T-cell (primary cell): ENCODE measurements at regions of chr2 and their contacts with region 1.

Region 1: DNA sequence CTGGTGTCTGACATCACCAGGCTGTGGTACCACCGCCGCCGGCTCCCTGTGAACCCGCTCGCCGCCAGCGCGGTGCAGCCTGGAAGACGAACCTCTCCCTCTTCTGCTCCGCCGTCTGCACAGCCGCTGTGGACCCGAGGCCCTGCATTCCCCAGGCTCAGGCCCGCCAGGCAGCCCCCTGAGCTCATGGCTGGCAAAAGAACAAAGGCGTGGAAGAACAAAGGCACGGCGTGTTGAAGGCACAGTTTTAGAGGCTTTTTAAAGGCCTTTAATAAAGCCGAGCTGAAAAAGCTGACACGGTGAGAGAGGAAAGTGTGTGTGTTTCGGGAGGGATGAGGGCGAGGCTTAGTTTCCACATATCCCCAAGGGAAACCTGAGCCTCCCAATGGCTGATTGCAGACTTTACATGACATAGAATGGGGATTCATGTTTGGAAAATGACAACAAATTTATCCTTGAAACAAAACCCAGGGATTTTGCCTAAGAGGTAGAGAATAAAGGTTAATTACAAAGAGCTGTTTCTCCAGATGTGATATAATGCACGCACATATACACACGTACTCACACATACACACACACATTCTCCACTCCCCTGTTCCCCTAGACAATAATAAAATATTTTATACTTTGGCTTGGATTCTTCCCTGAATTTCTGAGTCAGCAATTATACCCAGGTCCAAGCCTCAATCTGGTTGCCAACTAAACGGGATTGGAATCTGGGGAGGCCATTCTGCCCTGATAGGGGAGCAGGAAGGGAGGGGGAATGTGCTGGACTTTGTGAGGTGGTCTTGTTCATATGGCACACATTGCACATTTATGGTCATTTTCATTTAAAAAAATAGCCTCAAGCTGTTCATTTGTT is 39.7 kb downstream of the RFX8 start:
- DNase-seq: no peak
- ATAC-seq: no peak
- H3K4me3 ChIP-seq: no peak overlapping the region
- H3K4me3 Mint-ChIP-seq: no peak overlapping the region
- H3K27ac ChIP-seq: no peak overlapping the region
- H3K27ac Mint-ChIP-seq: no peak overlapping the region
- H3K4me1 ChIP-seq: no peaks in the 10 kb centered on the region
- H3K4me1 Mint-ChIP-seq: no peaks in the 10 kb centered on the region
- H3K27me3 ChIP-seq: no peaks in the 10 kb centered on the region
- H3K27me3 Mint-ChIP-seq: no peaks in the 10 kb centered on the region

Region 2: GRCh38 chr2:101446869-101447268 is 11.6 kb after region 1 on chr2:
- CTCF ChIA-PET with region 1: no interaction called
- POLR2A ChIA-PET with region 1: interaction called in 1 of 2 experiments, 11 read pairs
- DNase-seq: no peak
- ATAC-seq: no peak
- H3K4me3 ChIP-seq: no peak overlapping the region
- H3K4me3 Mint-ChIP-seq: no peak overlapping the region
- H3K27ac ChIP-seq: no peak overlapping the region
- H3K27ac Mint-ChIP-seq: no peak overlapping the region
- H3K4me1 ChIP-seq: no peaks in the 10 kb centered on the region
- H3K4me1 Mint-ChIP-seq: peaks cover 8 to 10% (median 9%) of the 10 kb centered on the region in 3 donors
- H3K27me3 ChIP-seq: peaks cover 0 to 3% of the 10 kb centered on the region in 2 experiments
- H3K27me3 Mint-ChIP-seq: no peaks in the 10 kb centered on the region

Region 3: DNA sequence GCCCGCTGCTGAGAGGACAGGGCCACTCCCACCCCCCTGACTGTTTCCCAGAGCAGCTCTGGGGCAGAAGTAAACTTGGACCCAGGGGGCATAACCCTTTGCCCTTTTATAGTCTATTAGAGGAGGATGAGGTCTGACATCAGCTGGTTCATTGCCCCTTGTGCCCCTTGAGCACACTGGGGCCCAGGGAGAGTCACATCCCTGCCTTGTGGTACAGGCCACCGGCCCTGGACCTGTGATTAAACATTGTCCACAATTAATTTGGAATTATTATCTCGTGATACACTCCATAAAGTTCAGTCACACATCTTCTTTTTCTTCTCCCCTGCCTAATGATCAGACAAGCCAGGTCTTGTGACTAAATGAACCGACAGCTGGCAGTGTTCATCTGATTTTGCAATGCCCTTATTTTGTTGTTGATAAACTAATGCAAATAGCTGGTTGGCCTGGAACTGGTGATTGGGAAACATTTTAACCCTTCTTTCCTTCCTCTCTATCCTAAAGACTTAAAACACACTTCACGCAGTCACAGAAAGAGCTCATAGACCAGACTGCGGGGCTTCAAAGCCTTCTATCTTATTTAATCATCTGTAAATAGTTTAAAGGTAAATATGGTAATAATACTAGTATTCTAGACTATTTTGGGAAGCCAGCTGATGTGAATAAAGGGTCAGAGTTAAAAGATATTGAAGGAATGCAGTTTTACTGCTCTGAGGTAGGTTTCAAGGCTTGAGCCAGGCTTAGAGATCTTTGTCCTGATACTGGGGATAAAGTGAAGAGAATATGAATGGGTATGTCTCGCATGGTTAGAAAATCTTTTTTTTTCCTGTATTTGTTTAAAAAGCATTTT is 720.6 kb after region 1 on chr2:
- CTCF ChIA-PET with region 1: no interaction called
- POLR2A ChIA-PET with region 1: no interaction called
- DNase-seq: no peak
- ATAC-seq: no peak
- H3K4me3 ChIP-seq: no peak overlapping the region
- H3K4me3 Mint-ChIP-seq: no peak overlapping the region
- H3K27ac ChIP-seq: no peak overlapping the region
- H3K27ac Mint-ChIP-seq: no peak overlapping the region
- H3K4me1 ChIP-seq: no peaks in the 10 kb centered on the region
- H3K4me1 Mint-ChIP-seq: no peaks in the 10 kb centered on the region
- H3K27me3 ChIP-seq: no peaks in the 10 kb centered on the region
- H3K27me3 Mint-ChIP-seq: no peaks in the 10 kb centered on the region